Activated CD4-positive, alpha-beta T cell treated with anti-CD3 and anti-CD28 coated beads, Interleukin-2, amount 10 ng/mL, durations not matched to agents 24 days and 14 days (primary cell): ENCODE measurements at regions of chr2 and their contacts with region 1.

Region 1: DNA sequence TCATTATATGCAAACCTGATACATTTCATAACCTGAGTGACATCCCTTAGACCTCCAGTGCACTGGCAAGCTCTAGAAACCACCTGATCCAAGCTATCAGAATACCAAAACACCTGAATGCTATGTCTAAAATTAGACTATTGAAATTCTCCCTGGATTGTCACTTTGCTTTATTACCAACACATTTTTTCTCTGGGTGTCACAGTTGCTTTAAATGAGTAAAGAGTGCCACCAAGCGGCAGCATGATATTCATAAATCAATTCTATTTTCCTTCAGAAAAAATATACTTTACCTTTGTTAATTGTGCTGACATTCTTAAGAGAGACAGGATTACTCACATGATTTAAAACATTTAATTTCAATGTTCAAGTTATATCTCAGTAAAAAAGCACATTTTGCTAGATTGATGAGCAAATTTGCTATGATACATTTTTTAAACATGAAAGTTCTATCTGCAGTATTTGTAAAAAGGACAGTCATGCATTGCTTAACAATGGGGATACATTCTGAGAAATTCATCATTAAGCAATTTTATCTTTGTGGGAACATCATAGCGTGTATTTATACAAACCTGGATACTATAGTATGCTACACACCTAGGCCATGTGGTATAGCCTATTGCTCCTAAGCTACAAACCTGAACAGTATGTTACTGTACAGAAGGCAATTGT is 338.4 kb upstream of the SLC39A10 start:
- DNase-seq: peak; percentile 82
- H3K4me3 Mint-ChIP-seq: no peak overlapping the region
- H3K27ac Mint-ChIP-seq: no peak overlapping the region
- H3K4me1 Mint-ChIP-seq: peaks cover 10% of the 10 kb centered on the region
- H3K27me3 Mint-ChIP-seq: no peaks in the 10 kb centered on the region

Region 2: GRCh38 chr2:194545978-194546377 is 772.6 kb before region 1 on chr2:
- intact Hi-C with region 1: loop called (anchors 5 kb)
- DNase-seq: no peak
- H3K4me3 Mint-ChIP-seq: no peak overlapping the region
- H3K27ac Mint-ChIP-seq: no peak overlapping the region
- H3K4me1 Mint-ChIP-seq: no peaks in the 10 kb centered on the region
- H3K27me3 Mint-ChIP-seq: no peaks in the 10 kb centered on the region

Region 3: DNA sequence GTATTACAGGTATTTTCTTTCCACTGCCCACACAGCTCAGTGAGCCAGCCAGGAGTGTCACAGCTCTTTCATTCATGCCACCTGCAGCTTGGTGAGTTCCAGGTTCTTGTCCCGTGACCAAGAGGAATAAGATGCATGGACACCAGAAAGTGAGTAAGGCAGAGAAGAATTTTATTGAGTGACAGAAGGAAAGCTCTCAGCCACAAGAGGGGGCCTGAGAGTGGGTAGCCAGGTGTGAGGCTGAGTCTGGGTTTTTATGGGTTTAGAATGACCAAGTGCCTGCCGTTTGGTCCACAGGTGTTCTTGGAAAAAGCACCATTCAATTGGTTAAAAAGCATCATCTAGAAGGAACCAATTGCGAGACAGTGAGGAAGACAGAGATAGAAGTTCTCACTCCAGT is 758.6 kb before region 1 on chr2:
- intact Hi-C with region 1: loop called (anchors 5 kb)
- DNase-seq: no peak
- H3K4me3 Mint-ChIP-seq: no peak overlapping the region
- H3K27ac Mint-ChIP-seq: no peak overlapping the region
- H3K4me1 Mint-ChIP-seq: no peaks in the 10 kb centered on the region
- H3K27me3 Mint-ChIP-seq: no peaks in the 10 kb centered on the region